SK-N-SH (cell line): ENCODE measurements at regions of chr11 and their contacts with region 1.

Region 1: DNA sequence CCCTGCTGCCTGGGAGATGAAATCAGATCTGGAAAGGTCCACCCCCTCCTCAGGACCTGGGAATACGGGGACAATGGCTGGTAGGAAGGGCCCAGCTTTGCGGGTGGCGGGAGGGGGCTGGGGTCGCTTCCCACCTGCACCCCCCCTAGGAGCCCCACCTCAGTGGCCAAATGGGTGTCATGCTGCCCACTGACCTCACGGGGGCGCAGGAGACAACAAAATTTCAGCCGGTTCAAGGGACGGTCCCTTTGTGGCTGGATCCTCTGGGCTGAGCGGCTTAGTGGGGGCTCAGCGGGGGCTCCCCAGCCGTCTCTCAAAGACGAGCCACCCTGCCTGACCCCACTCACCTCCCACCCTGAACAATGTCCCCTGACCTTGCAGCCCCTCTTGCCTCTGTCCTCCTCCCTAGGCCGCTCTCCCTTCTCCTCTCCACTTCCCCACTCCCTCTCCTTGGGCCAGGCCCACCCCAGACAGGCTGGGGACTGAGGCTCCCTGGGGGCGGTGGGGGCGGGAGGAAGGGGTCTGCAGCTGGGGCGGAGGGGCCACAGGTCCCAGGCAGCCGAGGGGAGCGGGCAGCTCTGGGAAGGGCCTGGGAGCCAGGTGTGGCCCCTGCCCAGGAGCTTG is 39.3 kb upstream of the H19 start:
- DNase-seq: no peak
- H3K4me3 ChIP-seq: no peak overlapping the region
- H3K27ac ChIP-seq: no peak overlapping the region
- H3K4me1 ChIP-seq: no peaks in the 10 kb centered on the region
- H3K27me3 ChIP-seq: no peaks in the 10 kb centered on the region
- CTCF ChIP-seq: no peak
- EP300 ChIP-seq: no peak
- RAD21 ChIP-seq: no peak

Region 2: GRCh38 chr11:1983601-1983961 is 53.4 kb before region 1 on chr11:
- CTCF ChIA-PET with region 1: interaction called, 10 read pairs
- POLR2A ChIA-PET with region 1: no interaction called
- DNase-seq: no peak
- H3K4me3 ChIP-seq: no peak overlapping the region
- H3K27ac ChIP-seq: no peak overlapping the region; a peak in 1 of 4 replicates
- H3K4me1 ChIP-seq: no peaks in the 10 kb centered on the region
- H3K27me3 ChIP-seq: no peaks in the 10 kb centered on the region
- CTCF ChIP-seq: no peak
- EP300 ChIP-seq: no peak
- RAD21 ChIP-seq: no peak

Region 3: GRCh38 chr11:2109541-2110019 is 72.6 kb after region 1 on chr11:
- CTCF ChIA-PET with region 1: interaction called, 10 read pairs
- POLR2A ChIA-PET with region 1: no interaction called
- DNase-seq: peak; percentile 51
- H3K4me3 ChIP-seq: no peak overlapping the region
- H3K27ac ChIP-seq: no peak overlapping the region; a peak in 1 of 4 replicates
- H3K4me1 ChIP-seq: peaks cover 0 to 4% of the 10 kb centered on the region in 2 experiments; a peak in 1 of 4 replicates
- H3K27me3 ChIP-seq: no peaks in the 10 kb centered on the region
- CTCF ChIP-seq: no peak
- EP300 ChIP-seq: no peak
- RAD21 ChIP-seq: no peak

Region 4: GRCh38 chr11:2128130-2128510 is 91.1 kb after region 1 on chr11:
- CTCF ChIA-PET with region 1: interaction called, 8 read pairs
- POLR2A ChIA-PET with region 1: interaction called, 20 read pairs
- DNase-seq: no peak
- H3K4me3 ChIP-seq: no peak overlapping the region
- H3K27ac ChIP-seq: no peak overlapping the region
- H3K4me1 ChIP-seq: peaks cover 0 to 5% of the 10 kb centered on the region in 2 experiments; a peak in 1 of 4 replicates
- H3K27me3 ChIP-seq: no peaks in the 10 kb centered on the region
- CTCF ChIP-seq: no peak
- EP300 ChIP-seq: no peak
- RAD21 ChIP-seq: no peak